ENCODE measurements at regions of chr10 and their contacts with region 1.

Region 1: DNA sequence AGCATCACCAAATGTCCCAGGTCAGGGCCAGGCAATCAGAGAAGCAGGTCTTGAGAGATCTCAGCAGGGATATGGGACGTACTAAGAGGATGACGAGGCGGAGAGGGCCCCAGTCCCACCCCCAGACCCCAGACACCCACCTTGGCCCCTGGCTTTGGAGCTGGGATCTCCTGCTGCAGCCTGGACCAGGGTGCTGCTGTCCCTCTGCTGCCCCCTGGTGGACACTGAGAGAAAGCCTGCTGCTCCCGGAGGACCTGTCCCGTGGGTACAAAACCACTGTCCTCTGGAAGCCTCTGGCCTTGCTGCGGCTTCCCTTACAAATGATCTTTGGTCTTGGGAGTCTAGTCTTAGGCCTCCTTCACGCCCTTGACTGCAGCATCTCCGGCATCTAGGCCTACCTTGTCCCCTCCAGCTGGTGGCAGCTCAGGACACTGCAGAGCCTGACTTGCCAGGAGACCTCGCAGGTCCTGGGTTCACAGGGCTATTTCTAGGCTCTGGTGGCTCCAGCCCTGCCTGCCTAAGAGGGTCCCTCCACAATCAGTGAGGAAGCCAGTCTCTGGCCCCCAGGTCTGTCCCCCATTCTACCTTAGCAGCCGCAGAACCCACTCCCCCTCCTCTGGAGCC is 97.1 kb downstream of the RGS10 start:
- DNase-seq: peak; percentile 86
- ATAC-seq: peak; percentile 75
- H3K4me3 ChIP-seq: no peak overlapping the region
- H3K4me3 Mint-ChIP-seq: no peak overlapping the region
- H3K27ac ChIP-seq: no peak overlapping the region
- H3K27ac Mint-ChIP-seq: peak overlapping the region; percentile 61
- H3K4me1 ChIP-seq: peaks cover 17 to 29% of the 10 kb centered on the region in 2 donors
- H3K4me1 Mint-ChIP-seq: peaks cover 35% of the 10 kb centered on the region
- H3K27me3 ChIP-seq: no peaks in the 10 kb centered on the region
- H3K27me3 Mint-ChIP-seq: no peaks in the 10 kb centered on the region
- CTCF ChIP-seq: peak; percentile 93

Region 2: DNA sequence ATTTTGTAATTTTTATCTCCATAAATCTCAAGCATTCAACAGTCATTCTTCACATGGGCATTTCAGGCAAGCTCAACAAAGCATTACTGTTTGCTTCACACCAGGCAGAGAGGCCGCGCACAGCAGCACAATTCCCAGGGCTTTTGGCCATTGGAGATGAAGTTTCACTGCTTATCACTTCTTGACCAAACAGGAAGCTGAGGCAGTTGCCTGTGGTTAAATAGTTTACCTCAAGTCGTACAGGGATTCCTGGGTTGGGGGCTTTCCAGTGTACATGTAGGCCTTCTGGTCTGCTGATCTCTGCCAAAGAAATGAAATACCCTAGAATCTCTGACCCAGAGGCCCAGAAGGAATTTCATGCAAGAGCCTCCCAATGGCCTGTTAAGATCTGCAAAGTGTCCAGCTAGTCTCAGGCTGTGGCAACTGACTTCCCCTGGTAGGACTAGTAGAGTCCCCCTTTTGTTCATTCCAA is 255.6 kb before region 1 on chr10:
- CTCF ChIA-PET with region 1: interaction called, 11 read pairs
- POLR2A ChIA-PET with region 1: no interaction called
- intact Hi-C with region 1: no loop called
- DNase-seq: peak; percentile 47
- ATAC-seq: no peak
- H3K4me3 ChIP-seq: no peak overlapping the region
- H3K4me3 Mint-ChIP-seq: no peak overlapping the region
- H3K27ac ChIP-seq: no peak overlapping the region
- H3K27ac Mint-ChIP-seq: peak overlapping the region; percentile 41
- H3K4me1 ChIP-seq: peaks cover 8 to 10% of the 10 kb centered on the region in 2 donors
- H3K4me1 Mint-ChIP-seq: peaks cover 11% of the 10 kb centered on the region
- H3K27me3 ChIP-seq: no peaks in the 10 kb centered on the region
- H3K27me3 Mint-ChIP-seq: no peaks in the 10 kb centered on the region
- CTCF ChIP-seq: no peak

Region 3: GRCh38 chr10:119416855-119417254 is 28.6 kb before region 1 on chr10:
- CTCF ChIA-PET with region 1: interaction called, 14 read pairs
- POLR2A ChIA-PET with region 1: no interaction called
- intact Hi-C with region 1: loop called (anchors 2 kb)
- DNase-seq: peak; percentile 83
- ATAC-seq: peak; percentile 90
- H3K4me3 ChIP-seq: no peak overlapping the region
- H3K4me3 Mint-ChIP-seq: no peak overlapping the region
- H3K27ac ChIP-seq: no peak overlapping the region
- H3K27ac Mint-ChIP-seq: peak overlapping the region; percentile 62
- H3K4me1 ChIP-seq: peaks cover 0 to 8% of the 10 kb centered on the region in 2 donors
- H3K4me1 Mint-ChIP-seq: peaks cover 6% of the 10 kb centered on the region
- H3K27me3 ChIP-seq: no peaks in the 10 kb centered on the region
- H3K27me3 Mint-ChIP-seq: no peaks in the 10 kb centered on the region
- CTCF ChIP-seq: peak; percentile 88

Region 4: GRCh38 chr10:119455609-119456434 is 10.4 kb after region 1 on chr10:
- CTCF ChIA-PET with region 1: interaction called, 14 read pairs
- POLR2A ChIA-PET with region 1: no interaction called
- intact Hi-C with region 1: no loop called
- DNase-seq: no peak
- ATAC-seq: peak; percentile 49
- H3K4me3 ChIP-seq: no peak overlapping the region
- H3K4me3 Mint-ChIP-seq: peak overlapping the region; percentile 55
- H3K27ac ChIP-seq: no peak overlapping the region
- H3K27ac Mint-ChIP-seq: peak overlapping the region; percentile 64
- H3K4me1 ChIP-seq: peaks cover 6 to 13% of the 10 kb centered on the region in 2 donors
- H3K4me1 Mint-ChIP-seq: peaks cover 11% of the 10 kb centered on the region
- H3K27me3 ChIP-seq: no peaks in the 10 kb centered on the region
- H3K27me3 Mint-ChIP-seq: no peaks in the 10 kb centered on the region
- CTCF ChIP-seq: no peak

Region 5: GRCh38 chr10:119478111-119478802 is 32.8 kb after region 1 on chr10:
- CTCF ChIA-PET with region 1: interaction called, 36 read pairs
- POLR2A ChIA-PET with region 1: interaction called, 4 read pairs
- intact Hi-C with region 1: no loop called
- DNase-seq: peak; percentile 77
- ATAC-seq: peak; percentile 95
- H3K4me3 ChIP-seq: peak overlapping the region in 2 of 5 experiments; percentile 5 to 42
- H3K4me3 Mint-ChIP-seq: peak overlapping the region; percentile 87
- H3K27ac ChIP-seq: peak overlapping the region; percentile 47 to 62
- H3K27ac Mint-ChIP-seq: peak overlapping the region; percentile 81
- H3K4me1 ChIP-seq: peaks cover 27 to 31% of the 10 kb centered on the region in 2 donors
- H3K4me1 Mint-ChIP-seq: peaks cover 37% of the 10 kb centered on the region
- H3K27me3 ChIP-seq: no peaks in the 10 kb centered on the region
- H3K27me3 Mint-ChIP-seq: no peaks in the 10 kb centered on the region
- CTCF ChIP-seq: no peak

Region 6: GRCh38 chr10:119542988-119543813 is 97.8 kb after region 1 on chr10:
- CTCF ChIA-PET with region 1: interaction called, 12 read pairs
- POLR2A ChIA-PET with region 1: no interaction called
- intact Hi-C with region 1: loop called (anchors 1 kb)
- DNase-seq: peak; percentile 81
- ATAC-seq: peak; percentile 46
- H3K4me3 ChIP-seq: peak overlapping the region in 4 of 5 experiments; percentile 58 to 78 (median 72)
- H3K4me3 Mint-ChIP-seq: peak overlapping the region; percentile 95
- H3K27ac ChIP-seq: no peak overlapping the region
- H3K27ac Mint-ChIP-seq: peak overlapping the region; percentile 85
- H3K4me1 ChIP-seq: peaks cover 11 to 22% of the 10 kb centered on the region in 2 donors
- H3K4me1 Mint-ChIP-seq: peaks cover 29% of the 10 kb centered on the region
- H3K27me3 ChIP-seq: peaks cover 0 to 3% (median 0%) of the 10 kb centered on the region in 4 experiments
- H3K27me3 Mint-ChIP-seq: peaks cover 8% of the 10 kb centered on the region
- CTCF ChIP-seq: peak; percentile 71

Measured in B cell (primary cell).